Right lobe of liver (tissue), 6 donors: ENCODE measurements at regions of chr16 and their contacts with region 1.

Region 1: GRCh38 chr16:11534262-11534661 is 52.5 kb downstream of the LITAF start:
- DNase-seq: peak; percentile 74 to 89 (median 80)
- ATAC-seq: peak; percentile 68 to 81 (median 76)
- H3K4me3 ChIP-seq: no peak overlapping the region
- H3K27ac ChIP-seq: peak overlapping the region; percentile 71 to 96 (median 90)
- H3K4me1 ChIP-seq: peaks cover 0 to 25% (median 12%) of the 10 kb centered on the region in 4 donors
- H3K27me3 ChIP-seq: no peaks in the 10 kb centered on the region
- CTCF ChIP-seq: no peak
- POLR2A ChIP-seq: no peak

Region 2: GRCh38 chr16:11515540-11516430 is 18.5 kb before region 1 on chr16:
- intact Hi-C with region 1: no loop called
- DNase-seq: peak in 1 of 3 donors; percentile 18
- ATAC-seq: peak in 2 of 4 donors; percentile 22 to 25
- H3K4me3 ChIP-seq: no peak overlapping the region
- H3K27ac ChIP-seq: no peak overlapping the region
- H3K4me1 ChIP-seq: no peaks in the 10 kb centered on the region
- H3K27me3 ChIP-seq: no peaks in the 10 kb centered on the region
- CTCF ChIP-seq: no peak
- POLR2A ChIP-seq: no peak

Region 3: DNA sequence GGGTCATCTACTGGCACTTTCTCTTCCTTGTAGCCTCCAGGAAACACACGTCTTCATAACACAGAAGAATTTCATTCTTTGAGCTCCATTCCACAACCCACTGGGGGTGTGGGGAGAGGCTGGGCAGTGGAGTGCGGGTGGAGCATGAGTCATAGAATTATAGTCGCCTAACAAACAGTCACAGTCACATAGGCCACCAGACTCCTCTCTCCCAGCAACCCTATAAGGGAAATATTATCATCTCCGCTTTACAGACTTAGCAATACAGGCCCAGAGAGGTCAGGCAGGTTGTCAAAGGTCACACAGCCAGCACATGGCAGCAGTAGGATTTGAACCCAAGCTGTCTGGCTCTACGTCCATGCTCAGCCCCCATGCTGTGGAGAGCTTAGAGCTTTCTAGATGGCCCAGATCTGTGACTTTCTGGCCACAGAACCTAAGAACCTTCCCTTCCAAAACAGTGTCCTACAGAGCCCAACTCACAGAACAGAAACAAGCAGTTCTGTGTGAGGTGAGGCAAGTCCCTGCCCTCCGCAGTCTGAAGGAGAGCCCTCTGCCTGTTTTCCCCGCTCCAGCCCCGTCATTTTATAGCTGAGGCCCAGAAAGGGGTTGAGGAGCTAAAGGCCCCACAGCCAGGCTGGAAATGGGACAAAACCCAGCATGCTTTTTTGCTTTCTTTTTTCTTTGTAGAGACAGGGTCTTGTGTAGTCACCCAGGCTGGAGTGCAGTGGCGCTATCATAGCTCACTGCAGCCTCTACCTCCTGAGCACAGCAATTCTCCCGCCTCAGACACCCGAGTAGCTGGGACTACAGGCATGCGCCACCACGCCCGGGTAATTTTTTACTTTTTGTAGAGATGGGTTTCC is 63.2 kb after region 1 on chr16:
- intact Hi-C with region 1: no loop called
- DNase-seq: peak in 2 of 3 donors; percentile 13 to 34
- ATAC-seq: peak; percentile 42 to 79 (median 50)
- H3K4me3 ChIP-seq: no peak overlapping the region
- H3K27ac ChIP-seq: peak overlapping the region in 2 of 3 donors; percentile 8 to 54
- H3K4me1 ChIP-seq: no peaks in the 10 kb centered on the region
- H3K27me3 ChIP-seq: no peaks in the 10 kb centered on the region
- CTCF ChIP-seq: no peak
- POLR2A ChIP-seq: no peak

Region 4: DNA sequence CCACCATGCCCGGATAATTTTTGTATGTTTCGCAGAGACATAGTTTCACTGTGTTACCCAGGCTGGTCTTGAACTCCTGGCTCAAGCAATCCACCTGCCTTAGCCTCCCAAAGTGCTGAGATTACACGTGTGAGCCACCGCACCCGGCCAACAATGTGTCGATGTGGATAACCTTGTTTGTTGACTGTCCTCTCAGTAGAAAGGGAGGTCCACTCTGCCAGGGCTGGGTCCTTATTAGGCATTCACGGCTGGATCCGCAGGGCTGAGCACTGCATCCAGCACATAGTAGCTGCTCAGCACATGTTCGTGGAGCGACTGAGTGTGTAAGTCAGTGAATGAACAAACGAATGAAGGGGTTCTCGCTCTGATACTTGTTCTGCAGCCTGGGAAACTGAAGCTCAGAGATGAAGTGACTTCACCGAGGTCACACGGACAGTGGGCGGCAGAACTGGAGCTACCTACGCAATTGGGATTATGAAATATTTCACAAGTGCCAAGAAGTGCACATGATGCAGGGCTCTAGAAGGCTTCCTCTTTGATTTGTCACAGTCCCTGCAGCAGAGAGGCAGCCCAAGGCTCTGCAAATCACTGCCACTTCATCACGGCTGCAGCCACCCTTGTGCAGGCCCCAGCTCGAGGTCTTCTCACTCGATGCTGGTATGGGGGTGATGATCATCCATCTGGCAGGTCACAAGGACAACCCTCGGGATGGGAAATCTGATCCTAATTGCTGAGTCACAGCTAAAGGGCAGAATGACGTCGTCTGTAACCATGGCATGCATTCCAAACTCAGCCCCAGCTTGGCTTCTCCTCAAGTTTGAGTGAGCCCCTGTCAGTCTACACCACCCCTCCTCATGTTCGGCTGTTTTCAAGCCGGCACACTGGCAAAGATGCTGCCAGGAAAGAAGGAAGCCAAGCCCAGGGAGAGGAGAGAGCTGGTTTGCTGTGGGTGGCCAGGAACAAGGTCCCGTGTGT is 106.0 kb after region 1 on chr16:
- intact Hi-C with region 1: loop called in 1 of 2 experiments (anchors 5 kb)
- DNase-seq: peak; percentile 78 to 91 (median 86)
- ATAC-seq: peak; percentile 80 to 91 (median 82)
- H3K4me3 ChIP-seq: no peak overlapping the region
- H3K27ac ChIP-seq: peak overlapping the region; percentile 92 to 97 (median 95)
- H3K4me1 ChIP-seq: peaks cover 0 to 17% (median 9%) of the 10 kb centered on the region in 4 donors
- H3K27me3 ChIP-seq: no peaks in the 10 kb centered on the region
- CTCF ChIP-seq: no peak
- POLR2A ChIP-seq: peak; percentile 77